Spleen (tissue), 13 donors: ENCODE measurements at regions of chr10 and their contacts with region 1.

Region 1: GRCh38 chr10:99845837-99846382 is 63.5 kb downstream of the ABCC2 start:
- DNase-seq: no peak
- H3K4me3 ChIP-seq: peak overlapping the region; percentile 8 to 61 (median 23)
- H3K27ac ChIP-seq: peak overlapping the region in 4 of 8 donors; percentile 16 to 47 (median 25)
- H3K4me1 ChIP-seq: peaks cover 7 to 27% (median 13%) of the 10 kb centered on the region in 6 donors
- H3K27me3 ChIP-seq: peaks cover 0 to 7% (median 0%) of the 10 kb centered on the region in 7 donors
- CTCF ChIP-seq: peak; percentile 80 to 97 (median 93)
- POLR2A ChIP-seq: no peak

Region 2: DNA sequence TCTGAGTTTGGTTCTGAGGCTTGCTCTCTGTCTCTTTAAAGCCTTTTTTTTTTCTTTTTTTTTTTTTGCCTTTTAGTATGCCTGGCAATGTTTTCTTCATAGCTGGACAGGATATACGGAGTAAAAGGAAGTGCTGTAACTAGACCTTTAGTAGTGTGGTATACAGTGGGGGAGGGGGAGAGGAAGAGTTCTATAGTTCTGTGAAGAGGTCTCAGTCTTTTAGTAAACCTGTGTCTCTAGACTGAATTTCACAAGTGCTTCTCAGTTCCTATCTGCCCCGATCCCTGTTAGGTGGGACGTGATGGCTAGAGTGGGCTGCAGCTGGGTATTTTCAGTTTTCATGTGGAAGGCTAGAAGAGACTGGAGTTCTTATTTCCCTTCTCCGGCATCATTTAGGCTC is 66.6 kb before region 1 on chr10:
- intact Hi-C with region 1: no loop called
- DNase-seq: no peak
- H3K4me3 ChIP-seq: peak overlapping the region in 1 of 8 donors; percentile 8
- H3K27ac ChIP-seq: peak overlapping the region; percentile 23 to 86 (median 81)
- H3K4me1 ChIP-seq: peaks cover 0 to 55% (median 12%) of the 10 kb centered on the region in 6 donors
- H3K27me3 ChIP-seq: no peaks in the 10 kb centered on the region
- CTCF ChIP-seq: no peak
- POLR2A ChIP-seq: no peak

Region 3: DNA sequence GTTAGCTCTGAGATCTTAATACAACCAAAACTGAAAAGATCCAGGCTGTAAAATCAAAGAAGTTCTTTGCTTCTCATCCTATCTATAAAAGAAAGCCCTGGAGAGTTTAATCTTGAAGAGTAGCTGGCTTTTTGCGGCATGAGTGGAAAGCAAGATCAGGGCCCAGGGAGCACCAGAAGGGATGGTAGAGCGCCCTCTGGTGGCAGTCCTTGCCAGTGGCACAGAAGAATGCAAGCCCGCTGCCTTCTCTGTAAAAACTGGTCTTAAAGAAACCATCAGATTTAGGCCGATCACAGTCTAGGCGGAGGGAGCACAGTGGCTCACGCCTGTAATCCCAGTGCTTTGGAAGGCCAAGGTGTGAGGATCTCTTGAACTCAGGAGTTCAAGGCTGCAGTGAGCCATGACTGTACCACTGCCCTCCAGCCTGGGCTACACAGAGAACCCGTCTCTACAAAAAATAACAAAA is 200.1 kb after region 1 on chr10:
- intact Hi-C with region 1: loop called (anchors 5 kb)
- DNase-seq: peak; percentile 95
- H3K4me3 ChIP-seq: no peak overlapping the region
- H3K27ac ChIP-seq: peak overlapping the region in 2 of 8 donors; percentile 7 to 33
- H3K4me1 ChIP-seq: peaks cover 0 to 42% (median 15%) of the 10 kb centered on the region in 6 donors
- H3K27me3 ChIP-seq: no peaks in the 10 kb centered on the region
- CTCF ChIP-seq: peak; percentile 82 to 96 (median 91)
- POLR2A ChIP-seq: no peak